Colonic mucosa (tissue), 4 donors: ENCODE measurements at regions of chr18 and their contacts with region 1.

Region 1: GRCh38 chr18:48675352-48675761 is 136.5 kb downstream of the CTIF start:
- DNase-seq: peak; percentile 88
- H3K4me3 ChIP-seq: no peak overlapping the region
- H3K27ac ChIP-seq: no peak overlapping the region
- H3K4me1 ChIP-seq: peaks cover 7% of the 10 kb centered on the region
- H3K27me3 ChIP-seq: no peaks in the 10 kb centered on the region
- CTCF ChIP-seq: peak; percentile 92

Region 2: DNA sequence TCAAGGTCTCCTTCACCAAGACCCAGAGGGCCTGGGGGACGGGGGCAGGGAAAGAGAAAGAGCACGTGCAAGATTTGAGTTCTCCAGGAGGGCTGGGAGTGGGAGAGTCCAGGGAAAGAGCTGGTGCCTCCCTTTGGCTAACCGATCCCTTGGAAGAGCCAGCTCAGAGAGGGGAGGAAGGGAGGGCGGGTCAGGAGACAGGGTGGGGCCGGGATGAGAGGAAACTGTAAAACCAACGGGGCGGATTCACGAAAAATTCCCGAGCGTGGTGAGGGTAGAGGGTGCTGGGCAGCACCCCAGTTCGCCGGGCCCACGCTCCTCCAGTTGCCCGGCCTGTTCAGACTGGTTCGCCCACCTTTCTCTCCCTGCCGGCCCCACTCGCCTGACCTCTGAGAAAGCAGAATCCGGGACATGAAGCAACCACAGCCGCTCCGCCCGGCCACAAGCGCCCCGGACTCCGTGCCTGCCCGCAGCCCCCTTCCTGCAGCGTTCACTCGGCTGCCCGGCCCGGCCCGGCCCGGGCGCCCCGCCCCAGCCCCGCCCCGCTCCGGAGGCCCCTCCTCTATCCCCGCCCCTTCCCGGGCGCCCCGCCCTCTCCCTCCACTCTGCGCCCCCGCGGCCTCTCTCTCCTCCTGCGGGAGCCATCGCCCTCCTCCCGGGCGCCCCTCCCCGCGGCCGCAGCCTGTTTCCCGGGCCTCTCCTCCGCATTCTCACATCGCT is 514.0 kb before region 1 on chr18:
- intact Hi-C with region 1: no loop called
- DNase-seq: peak; percentile 91
- H3K4me3 ChIP-seq: peak overlapping the region; percentile 53
- H3K27ac ChIP-seq: peak overlapping the region; percentile 95
- H3K4me1 ChIP-seq: peaks cover 5% of the 10 kb centered on the region
- H3K27me3 ChIP-seq: no peaks in the 10 kb centered on the region
- CTCF ChIP-seq: no peak

Region 3: GRCh38 chr18:48777026-48777743 is 101.8 kb after region 1 on chr18:
- intact Hi-C with region 1: loop called (anchors 5 kb)
- DNase-seq: peak; percentile 59
- H3K4me3 ChIP-seq: no peak overlapping the region
- H3K27ac ChIP-seq: no peak overlapping the region
- H3K4me1 ChIP-seq: peaks cover 6% of the 10 kb centered on the region
- H3K27me3 ChIP-seq: no peaks in the 10 kb centered on the region
- CTCF ChIP-seq: peak; percentile 90

Region 4: GRCh38 chr18:49041435-49042245 is 366.3 kb after region 1 on chr18:
- intact Hi-C with region 1: loop called (anchors 10 kb)
- DNase-seq: peak; percentile 65
- H3K4me3 ChIP-seq: no peak overlapping the region
- H3K27ac ChIP-seq: no peak overlapping the region
- H3K4me1 ChIP-seq: no peaks in the 10 kb centered on the region
- H3K27me3 ChIP-seq: no peaks in the 10 kb centered on the region
- CTCF ChIP-seq: peak; percentile 52

Region 5: DNA sequence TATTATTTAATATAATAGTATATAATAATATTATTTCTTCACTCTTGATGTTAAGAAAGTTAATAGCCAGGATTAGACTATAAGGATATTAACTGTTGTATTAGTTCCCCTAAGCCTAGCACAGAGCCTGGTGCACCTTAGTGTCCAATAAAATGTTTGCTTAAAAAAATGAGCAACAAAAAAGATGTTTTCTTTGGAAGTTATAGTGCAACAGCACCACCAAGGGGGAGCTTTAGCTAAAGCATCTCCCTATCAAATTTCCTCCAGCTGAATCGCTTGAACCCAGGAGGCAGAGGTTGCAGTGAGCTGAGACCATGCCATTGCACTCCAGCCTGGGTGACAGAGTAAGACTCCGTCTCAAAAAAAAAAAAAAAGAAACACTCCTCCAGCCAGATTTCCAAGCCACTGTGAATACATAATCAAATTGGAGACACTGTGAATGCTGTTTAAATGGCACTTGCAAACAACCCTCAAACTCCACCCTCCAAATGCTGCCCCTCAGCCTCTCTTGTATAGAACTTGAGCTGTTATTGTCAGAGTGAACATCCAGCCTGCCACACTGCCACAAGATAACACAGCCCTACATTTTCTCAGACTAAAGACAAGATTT is 563.2 kb after region 1 on chr18:
- intact Hi-C with region 1: loop called (anchors 5 kb)
- DNase-seq: no peak
- H3K4me3 ChIP-seq: no peak overlapping the region
- H3K27ac ChIP-seq: no peak overlapping the region
- H3K4me1 ChIP-seq: no peaks in the 10 kb centered on the region
- H3K27me3 ChIP-seq: no peaks in the 10 kb centered on the region
- CTCF ChIP-seq: peak; percentile 35

Region 6: DNA sequence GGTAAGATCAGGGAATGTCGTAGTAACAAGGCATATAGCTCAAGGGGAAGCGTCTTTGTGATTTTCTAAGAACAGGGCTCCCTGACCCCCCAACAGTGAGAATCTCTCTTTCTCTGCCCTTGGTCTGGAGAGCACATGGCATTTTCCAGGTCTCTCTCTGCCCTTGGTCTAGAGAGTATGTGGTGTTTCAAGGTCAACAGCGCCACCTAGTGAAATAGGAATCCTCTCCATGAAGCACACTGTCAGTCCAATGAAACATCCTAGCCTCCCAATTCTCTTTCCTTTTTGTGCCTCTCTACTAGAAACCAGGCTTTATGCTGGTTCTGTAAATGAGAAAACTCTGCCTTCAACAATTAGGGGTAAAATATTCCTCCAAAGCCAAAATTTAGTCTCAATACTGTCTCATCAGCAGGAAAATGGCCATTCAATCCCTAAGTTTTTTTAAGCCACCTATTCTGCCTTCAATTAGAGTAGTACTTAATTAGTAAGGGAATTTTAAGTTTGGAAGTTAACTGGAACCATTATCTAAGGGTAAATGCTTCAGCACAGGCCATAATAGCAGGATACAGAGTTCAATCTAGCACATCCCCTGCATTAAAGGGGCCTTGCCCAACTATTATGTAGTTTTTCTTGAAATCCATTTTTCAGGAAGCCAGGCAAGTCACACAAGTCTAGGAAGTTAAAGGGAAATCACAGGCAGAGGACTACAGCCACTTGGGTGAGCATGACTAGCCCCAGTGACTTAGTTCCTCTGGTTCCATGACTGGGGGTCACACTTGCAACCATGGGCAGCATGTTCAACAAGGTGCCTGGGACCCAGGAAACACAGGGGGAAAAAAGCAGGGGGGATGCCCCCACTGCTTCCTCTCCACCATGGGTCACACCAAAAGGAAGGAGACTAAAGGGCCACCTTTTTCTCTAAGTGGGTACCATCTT is 772.7 kb after region 1 on chr18:
- intact Hi-C with region 1: loop called (anchors 10 kb)
- DNase-seq: peak; percentile 58
- H3K4me3 ChIP-seq: no peak overlapping the region
- H3K27ac ChIP-seq: no peak overlapping the region
- H3K4me1 ChIP-seq: no peaks in the 10 kb centered on the region
- H3K27me3 ChIP-seq: no peaks in the 10 kb centered on the region
- CTCF ChIP-seq: peak; percentile 57